GM12878 (cell line): ENCODE measurements at regions of chr2 and their contacts with region 1.

Region 1: GRCh38 chr2:202634556-202635427 is at the start of gene FAM117B:
- DNase-seq: peak; percentile 84
- ATAC-seq: peak; percentile 96
- H3K4me3 ChIP-seq: peak within 1 kb of the TSS; percentile 98
- H3K27ac ChIP-seq: peak within 1 kb of the TSS; percentile 78
- H3K4me1 ChIP-seq: 0 out of 2 replicates have a peak, but pooled peaks cover 4% of the 10 kb centered on the region
- H3K27me3 ChIP-seq: no peaks in the 10 kb centered on the region
- CTCF ChIP-seq: peak in 2 of 3 experiments; percentile 14 to 16; a peak in 1 of 6 replicates
- EP300 ChIP-seq: peak; percentile 8 to 29; a peak in 2 of 4 replicates
- POLR2A ChIP-seq: peak; percentile 86
- RAD21 ChIP-seq: 0 out of 2 replicates have a peak, but pooled peaks have one; percentile 1
- polyA plus RNA-seq, gene FAM117B: 1.6 to 4.1 TPM

Region 2: DNA sequence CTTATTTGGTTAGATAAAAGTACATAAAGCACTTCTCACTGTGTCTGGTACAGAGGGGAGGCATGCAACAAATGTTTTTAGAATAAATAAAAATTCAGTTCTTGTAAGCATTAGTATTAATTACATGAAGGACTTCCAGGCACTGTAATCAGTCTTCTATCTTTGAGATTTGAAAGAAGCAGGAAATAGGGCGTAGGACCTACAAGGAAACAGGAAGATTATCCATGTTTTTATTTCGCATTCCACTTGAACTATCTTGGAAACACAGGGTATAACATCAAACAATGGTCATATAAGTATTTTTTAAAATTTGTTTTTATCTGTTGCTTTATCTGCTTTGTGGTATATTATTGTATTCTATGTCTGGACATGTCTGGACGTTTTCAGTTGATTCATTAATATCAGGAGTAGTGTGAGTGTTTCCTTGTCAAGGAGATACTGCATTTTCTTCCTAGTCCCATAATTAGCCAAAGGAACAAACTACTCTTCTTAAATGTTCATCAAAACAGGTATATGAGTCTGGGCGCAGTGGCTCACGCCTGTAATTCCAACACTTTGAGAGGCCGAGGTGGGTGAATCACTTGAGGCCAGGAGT is 226.1 kb before region 1 on chr2:
- CTCF ChIA-PET with region 1: no interaction called
- POLR2A ChIA-PET with region 1: no interaction called
- RAD21 ChIA-PET with region 1: no interaction called
- SMC1A ChIA-PET with region 1: no interaction called
- in situ Hi-C with region 1: no loop called
- intact Hi-C with region 1: no loop called
- DNase-seq: no peak
- ATAC-seq: no peak
- H3K4me3 ChIP-seq: no peak overlapping the region
- H3K27ac ChIP-seq: no peak overlapping the region
- H3K4me1 ChIP-seq: peaks cover 6% of the 10 kb centered on the region
- H3K27me3 ChIP-seq: no peaks in the 10 kb centered on the region
- CTCF ChIP-seq: no peak
- EP300 ChIP-seq: no peak
- POLR2A ChIP-seq: no peak
- RAD21 ChIP-seq: no peak

Region 3: DNA sequence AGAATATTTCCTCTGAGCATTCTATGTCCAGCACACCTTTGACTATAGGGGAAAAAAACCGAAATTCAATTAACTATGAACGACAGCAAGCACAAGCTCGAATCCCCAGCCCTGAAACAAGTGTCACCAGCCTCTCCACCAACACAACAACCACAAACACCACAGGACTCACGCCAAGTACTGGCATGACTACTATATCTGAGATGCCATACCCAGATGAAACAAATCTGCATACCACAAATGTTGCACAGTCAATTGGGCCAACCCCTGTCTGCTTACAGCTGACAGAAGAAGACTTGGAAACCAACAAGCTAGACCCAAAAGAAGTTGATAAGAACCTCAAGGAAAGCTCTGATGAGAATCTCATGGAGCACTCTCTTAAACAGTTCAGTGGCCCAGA is 79.4 kb before region 1 on chr2:
- CTCF ChIA-PET with region 1: no interaction called
- POLR2A ChIA-PET with region 1: no interaction called
- RAD21 ChIA-PET with region 1: no interaction called
- SMC1A ChIA-PET with region 1: no interaction called
- in situ Hi-C with region 1: no loop called
- intact Hi-C with region 1: no loop called
- DNase-seq: no peak
- ATAC-seq: no peak
- H3K4me3 ChIP-seq: no peak overlapping the region
- H3K27ac ChIP-seq: no peak overlapping the region
- H3K4me1 ChIP-seq: no peaks in the 10 kb centered on the region
- H3K27me3 ChIP-seq: no peaks in the 10 kb centered on the region
- CTCF ChIP-seq: no peak
- EP300 ChIP-seq: no peak
- POLR2A ChIP-seq: no peak
- RAD21 ChIP-seq: no peak

Region 4: DNA sequence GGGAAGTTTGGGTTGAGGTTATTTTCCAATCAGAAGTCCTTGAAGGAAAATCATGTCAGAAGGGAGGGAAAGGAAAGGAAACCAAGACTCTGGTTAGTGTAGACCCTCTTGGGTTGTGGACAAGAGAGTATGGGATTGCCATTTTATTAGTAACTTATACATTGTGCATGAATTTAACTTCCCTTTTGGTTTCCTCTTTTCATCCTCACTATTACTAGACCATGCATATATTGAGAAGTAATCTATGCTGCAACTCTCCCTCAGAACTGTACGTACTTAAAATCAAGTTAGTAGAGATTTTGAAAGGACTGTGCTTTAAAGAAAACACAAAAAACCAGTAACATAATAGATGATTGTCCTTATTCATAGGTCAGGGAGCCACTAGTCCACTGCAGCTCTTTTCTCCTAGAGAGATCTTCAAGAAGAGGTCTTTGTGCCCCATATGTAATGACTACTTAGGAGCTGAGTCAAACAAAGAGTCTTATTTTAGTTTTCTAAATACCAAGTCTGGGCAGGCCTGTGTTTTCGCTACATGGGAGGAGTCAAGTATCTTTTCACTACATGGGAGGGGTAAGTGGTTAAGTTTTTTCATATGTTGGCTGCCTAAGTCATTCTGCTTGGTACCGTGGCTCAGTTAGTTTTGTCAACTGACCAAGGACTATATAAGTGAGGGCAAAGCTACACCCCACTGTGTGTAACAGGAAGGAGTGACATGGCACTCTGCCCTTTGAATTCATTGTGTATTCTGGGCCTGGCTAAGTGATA is 25.2 kb before region 1 on chr2:
- CTCF ChIA-PET with region 1: interaction called, 12 read pairs
- POLR2A ChIA-PET with region 1: interaction called, 18 read pairs
- RAD21 ChIA-PET with region 1: interaction called, 16 read pairs
- SMC1A ChIA-PET with region 1: interaction called, 8 read pairs
- in situ Hi-C with region 1: no loop called
- intact Hi-C with region 1: loop called (anchors 2 kb)
- DNase-seq: peak; percentile 90
- ATAC-seq: peak; percentile 91
- H3K4me3 ChIP-seq: no peak overlapping the region
- H3K27ac ChIP-seq: peak overlapping the region; percentile 64
- H3K4me1 ChIP-seq: peaks cover 34% of the 10 kb centered on the region
- H3K27me3 ChIP-seq: no peaks in the 10 kb centered on the region
- CTCF ChIP-seq: no peak
- EP300 ChIP-seq: no peak; a peak in 1 of 4 replicates
- POLR2A ChIP-seq: no peak
- RAD21 ChIP-seq: no peak

Region 5: DNA sequence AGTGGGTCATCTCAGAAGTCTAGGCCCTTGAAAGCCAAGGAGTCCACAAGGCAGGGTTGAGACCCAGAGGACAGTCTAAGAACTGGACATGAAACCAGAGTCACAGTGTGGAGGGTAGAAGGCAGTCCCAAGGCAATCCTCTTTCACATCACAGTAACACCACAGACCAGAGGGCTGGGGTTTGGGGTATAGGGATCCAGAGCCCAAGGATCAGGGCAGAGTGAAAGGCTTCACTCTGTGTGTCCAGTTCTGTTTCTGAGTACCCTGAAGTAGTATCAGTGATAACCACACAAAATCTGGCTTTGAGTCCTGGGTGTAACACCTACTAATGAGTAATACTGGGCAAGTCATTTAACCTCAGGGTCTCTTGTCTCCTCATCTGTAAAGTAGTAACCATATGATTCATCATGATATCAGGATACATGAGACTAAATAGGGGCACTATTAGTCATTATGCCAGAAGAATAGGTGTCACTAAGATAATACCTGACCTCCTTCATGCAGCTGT is 145.8 kb after region 1 on chr2:
- CTCF ChIA-PET with region 1: no interaction called
- POLR2A ChIA-PET with region 1: no interaction called
- RAD21 ChIA-PET with region 1: no interaction called
- SMC1A ChIA-PET with region 1: no interaction called
- in situ Hi-C with region 1: no loop called
- intact Hi-C with region 1: loop called (anchors 5 kb)
- DNase-seq: peak; percentile 39
- ATAC-seq: peak; percentile 98
- H3K4me3 ChIP-seq: no peak overlapping the region
- H3K27ac ChIP-seq: no peak overlapping the region
- H3K4me1 ChIP-seq: peaks cover 3% of the 10 kb centered on the region; the same call in 1 of the 2 replicates
- H3K27me3 ChIP-seq: no peaks in the 10 kb centered on the region
- CTCF ChIP-seq: no peak
- EP300 ChIP-seq: peak; percentile 43 to 60; a peak in 2 of 4 replicates
- POLR2A ChIP-seq: no peak
- RAD21 ChIP-seq: no peak